Cardiac septum (tissue), 1 donor: ENCODE measurements at regions of chr2 and their contacts with region 1.

Region 1: GRCh38 chr2:216572582-216573578 is 60.3 kb upstream of the IGFBP2 start:
- DNase-seq: peak; percentile 92

Region 2: DNA sequence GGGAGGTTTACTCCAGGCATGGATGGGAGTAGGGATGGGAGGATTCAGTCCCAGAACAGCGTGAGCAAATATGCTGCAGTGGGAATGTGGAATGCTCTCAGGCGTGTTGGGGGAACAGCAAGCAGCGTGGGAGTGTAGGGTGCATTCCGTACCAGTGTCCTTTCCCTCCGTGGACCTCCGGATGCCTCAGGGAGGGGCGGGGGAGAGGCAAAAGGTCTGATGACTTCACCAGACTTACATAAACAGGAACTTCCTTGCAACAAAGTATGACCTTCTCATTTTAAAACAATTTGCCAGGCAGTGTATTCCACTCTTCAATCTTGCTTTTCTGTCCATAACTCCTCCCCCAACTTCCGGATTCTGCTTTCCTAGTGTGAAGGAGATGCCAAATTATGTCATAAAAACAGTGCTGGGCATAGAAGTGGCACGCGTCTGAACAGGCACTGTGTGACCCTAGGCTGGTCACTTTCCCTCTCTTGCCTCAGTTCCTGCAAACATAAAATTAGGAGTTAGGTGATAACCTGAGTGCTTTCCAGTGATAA is 37.4 kb before region 1 on chr2:
- intact Hi-C with region 1: loop called (anchors 2 kb)
- DNase-seq: peak; percentile 87

Region 3: DNA sequence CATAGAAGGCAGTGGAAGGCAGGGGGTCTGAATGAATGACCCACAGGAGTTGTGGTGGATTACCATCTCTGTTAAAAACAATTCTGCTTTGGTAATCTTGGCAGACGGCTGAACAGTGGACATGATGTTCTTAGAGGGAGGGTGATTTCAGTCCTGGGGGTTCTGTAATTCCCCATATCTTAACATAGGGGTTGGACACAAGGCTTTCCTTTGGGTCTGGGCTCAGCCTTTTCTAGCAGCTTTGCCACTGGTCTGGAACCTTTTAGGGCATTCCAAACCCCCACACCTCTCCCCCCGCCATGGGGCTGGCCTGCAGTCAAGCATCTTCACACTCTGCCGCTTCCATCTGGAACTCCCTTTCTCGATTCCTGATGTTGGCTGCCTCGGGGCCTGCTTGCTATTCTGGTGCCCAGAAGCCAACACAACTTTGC is 24.0 kb before region 1 on chr2:
- intact Hi-C with region 1: loop called (anchors 1 kb)
- DNase-seq: peak; percentile 83

Region 4: GRCh38 chr2:216632952-216633615 is 60.2 kb after region 1 on chr2 and contains the start of gene IGFBP2:
- intact Hi-C with region 1: loop called (anchors 10 kb)
- DNase-seq: no peak
- total RNA-seq, gene IGFBP2: 785 TPM

Region 5: DNA sequence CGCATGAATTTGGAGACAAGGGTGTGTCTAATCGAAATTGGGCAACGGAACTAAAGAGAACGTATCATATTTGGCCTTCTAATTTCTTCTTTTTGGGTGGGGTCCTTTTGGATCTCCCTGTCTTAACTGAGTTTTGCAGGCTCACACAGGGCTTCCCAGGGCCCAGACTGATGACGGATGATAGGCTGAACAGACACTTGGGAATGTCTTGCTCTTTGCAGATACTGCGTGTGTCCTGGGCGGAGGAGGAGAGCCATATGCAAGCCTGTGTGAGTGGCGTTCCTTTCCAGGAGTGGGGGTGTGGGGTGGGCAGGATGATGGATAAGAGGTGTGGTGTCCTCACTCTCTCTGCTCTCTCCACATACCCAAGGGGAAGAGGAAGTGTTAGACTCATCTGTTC is 246.9 kb after region 1 on chr2:
- intact Hi-C with region 1: no loop called
- DNase-seq: no peak